ENCODE measurements at regions of chr1 and their contacts with region 1.

Region 1: GRCh38 chr1:37323486-37324377 is 150.6 kb upstream of the ZC3H12A start:
- DNase-seq: no peak
- ATAC-seq: no peak
- H3K4me3 ChIP-seq: no peak overlapping the region
- H3K4me3 Mint-ChIP-seq: no peak overlapping the region
- H3K27ac ChIP-seq: no peak overlapping the region
- H3K27ac Mint-ChIP-seq: no peak overlapping the region
- H3K4me1 ChIP-seq: no peaks in the 10 kb centered on the region
- H3K4me1 Mint-ChIP-seq: peaks cover 0 to under 1% (median 0%) of the 10 kb centered on the region in 7 donors
- H3K27me3 ChIP-seq: peaks cover 0 to 3% of the 10 kb centered on the region in 2 donors
- H3K27me3 Mint-ChIP-seq: peaks cover 14 to 71% (median 49%) of the 10 kb centered on the region in 5 donors

Region 2: DNA sequence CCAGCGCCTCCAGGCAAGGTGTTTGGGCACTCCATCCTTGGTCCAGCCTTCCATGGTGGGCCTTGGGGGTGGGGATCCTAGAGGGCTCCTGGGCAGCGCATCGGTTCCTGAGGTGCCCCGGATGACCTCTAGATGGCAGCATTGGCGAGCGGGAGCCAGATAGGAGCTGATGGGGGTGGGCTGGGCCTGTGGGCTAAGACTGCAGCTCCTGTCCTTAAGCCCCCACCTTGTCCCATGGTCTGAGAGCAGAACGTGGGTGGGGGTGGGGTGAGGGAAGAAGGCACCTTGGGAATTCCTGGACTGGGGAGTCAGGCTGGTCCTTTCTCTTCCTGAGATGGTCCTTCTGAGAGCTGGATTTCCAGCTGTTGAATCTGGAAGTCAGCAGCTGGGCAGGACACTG is 747.6 kb before region 1 on chr1:
- CTCF ChIA-PET with region 1: no interaction called
- POLR2A ChIA-PET with region 1: no interaction called
- intact Hi-C with region 1: loop called in 1 of 2 experiments (anchors 5 kb)
- DNase-seq: peak in 8 of 9 donors; percentile 12 to 46 (median 30)
- ATAC-seq: peak; percentile 42
- H3K4me3 ChIP-seq: no peak overlapping the region
- H3K4me3 Mint-ChIP-seq: no peak overlapping the region
- H3K27ac ChIP-seq: no peak overlapping the region
- H3K27ac Mint-ChIP-seq: no peak overlapping the region
- H3K4me1 ChIP-seq: no peaks in the 10 kb centered on the region
- H3K4me1 Mint-ChIP-seq: peaks cover 0 to 5% (median 0%) of the 10 kb centered on the region in 7 donors
- H3K27me3 ChIP-seq: no peaks in the 10 kb centered on the region
- H3K27me3 Mint-ChIP-seq: peaks cover 23 to 36% (median 27%) of the 10 kb centered on the region in 5 donors

Region 3: DNA sequence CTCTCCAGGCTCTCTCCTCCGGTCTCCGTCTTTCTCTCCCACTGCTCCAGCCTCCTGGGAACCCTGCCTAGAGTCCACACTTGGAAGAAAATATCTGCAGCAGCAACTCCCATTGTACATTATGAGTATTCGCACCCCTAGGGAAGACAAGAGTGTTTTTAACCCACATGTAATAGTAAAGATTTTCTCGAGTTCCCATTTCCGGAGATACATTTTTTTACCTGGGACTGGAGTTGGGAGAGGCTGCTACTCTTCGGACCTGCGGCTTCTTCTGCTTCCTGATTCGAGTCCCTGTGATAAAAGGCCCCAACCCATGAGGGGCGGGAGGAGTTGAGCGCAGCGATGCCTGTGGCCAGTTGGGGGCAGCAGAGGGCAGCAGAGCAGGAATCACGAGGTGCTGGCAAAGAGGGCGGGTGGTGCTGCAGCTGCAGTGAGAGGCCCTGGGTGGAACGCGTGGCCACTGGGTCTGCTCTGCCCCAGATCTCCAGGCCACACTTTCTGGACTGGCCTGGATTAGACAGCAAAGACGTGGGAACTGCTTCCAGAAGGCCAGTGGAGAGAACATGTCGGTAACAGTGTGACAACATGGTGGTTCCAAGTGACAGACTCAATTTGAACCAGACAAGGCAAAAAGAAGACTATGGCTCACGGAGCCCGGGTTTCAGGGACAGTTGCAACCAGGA is 620.1 kb before region 1 on chr1:
- CTCF ChIA-PET with region 1: no interaction called
- POLR2A ChIA-PET with region 1: no interaction called
- intact Hi-C with region 1: loop called in 1 of 2 experiments (anchors 5 kb)
- DNase-seq: peak in 7 of 9 donors; percentile 25 to 71 (median 28)
- ATAC-seq: peak; percentile 83
- H3K4me3 ChIP-seq: no peak overlapping the region
- H3K4me3 Mint-ChIP-seq: no peak overlapping the region
- H3K27ac ChIP-seq: no peak overlapping the region
- H3K27ac Mint-ChIP-seq: no peak overlapping the region
- H3K4me1 ChIP-seq: no peaks in the 10 kb centered on the region
- H3K4me1 Mint-ChIP-seq: peaks cover 0 to 10% (median 7%) of the 10 kb centered on the region in 7 donors
- H3K27me3 ChIP-seq: peaks cover 0 to 3% of the 10 kb centered on the region in 2 donors
- H3K27me3 Mint-ChIP-seq: peaks cover 22 to 51% (median 38%) of the 10 kb centered on the region in 5 donors

Region 4: DNA sequence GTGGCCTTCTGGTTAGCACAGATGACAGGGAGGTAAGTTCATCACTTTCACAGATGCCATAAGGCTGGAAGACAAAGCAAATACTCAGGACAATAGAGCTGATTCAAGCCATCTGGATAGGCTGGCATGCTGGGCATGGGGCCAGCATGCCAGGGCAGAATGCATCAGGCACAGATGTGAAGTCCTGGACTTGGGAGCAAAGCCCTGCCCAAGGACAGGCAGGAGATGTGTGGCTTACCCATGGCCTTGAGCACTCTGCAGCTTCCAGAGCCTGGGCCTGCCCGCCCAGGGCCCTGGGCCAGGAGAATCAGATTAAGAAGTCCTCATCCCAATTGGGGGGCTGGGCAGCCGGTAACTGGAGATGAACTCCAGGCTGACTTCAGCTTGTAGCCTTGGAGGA is 14.9 kb after region 1 on chr1:
- CTCF ChIA-PET with region 1: no interaction called
- POLR2A ChIA-PET with region 1: no interaction called
- intact Hi-C with region 1: no loop called
- DNase-seq: no peak
- ATAC-seq: no peak
- H3K4me3 ChIP-seq: no peak overlapping the region
- H3K4me3 Mint-ChIP-seq: no peak overlapping the region
- H3K27ac ChIP-seq: no peak overlapping the region
- H3K27ac Mint-ChIP-seq: no peak overlapping the region
- H3K4me1 ChIP-seq: no peaks in the 10 kb centered on the region
- H3K4me1 Mint-ChIP-seq: no peaks in the 10 kb centered on the region
- H3K27me3 ChIP-seq: no peaks in the 10 kb centered on the region
- H3K27me3 Mint-ChIP-seq: peaks cover 0 to 43% (median 22%) of the 10 kb centered on the region in 5 donors

Measured in naive thymus-derived CD4-positive, alpha-beta T cell (primary cell).